ENCODE measurements at regions of chr1 and their contacts with region 1.

Region 1: GRCh38 chr1:61043010-61043820 is 39.1 kb upstream of the NFIA start:
- DNase-seq: no peak
- ATAC-seq: peak; percentile 99
- H3K4me3 ChIP-seq: peak overlapping the region; percentile 16 to 44
- H3K27ac ChIP-seq: no peak overlapping the region
- H3K4me1 ChIP-seq: no peaks in the 10 kb centered on the region
- H3K27me3 ChIP-seq: peaks cover 4% of the 10 kb centered on the region; the same call in 1 of the 2 replicates
- CTCF ChIP-seq: peak; percentile 93

Region 2: DNA sequence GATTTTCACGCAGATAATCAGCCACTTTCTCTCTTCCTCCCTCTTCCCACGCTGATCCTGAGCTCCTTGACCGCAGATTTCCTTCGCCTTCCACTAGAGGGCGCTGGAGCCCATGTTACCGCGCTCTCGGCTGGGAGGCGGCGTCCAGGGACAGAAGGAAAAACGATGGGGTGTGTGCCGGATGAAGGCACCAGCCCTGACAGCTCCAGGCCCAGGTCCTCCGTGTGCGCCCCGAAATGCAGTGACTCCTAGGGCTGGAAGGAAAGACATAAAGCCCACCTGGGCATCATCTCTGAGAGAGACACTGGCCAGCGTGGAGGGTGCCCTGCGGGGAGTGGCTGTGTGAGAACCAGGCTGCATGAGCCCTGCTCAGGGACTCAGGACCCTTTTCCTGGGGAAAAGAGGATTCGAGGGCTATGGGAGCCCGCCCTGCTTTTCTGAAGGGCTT is 1071.7 kb before region 1 on chr1:
- CTCF ChIA-PET with region 1: interaction called, 4 read pairs
- POLR2A ChIA-PET with region 1: no interaction called
- in situ Hi-C with region 1: no loop called
- intact Hi-C with region 1: loop called (anchors 5 kb)
- DNase-seq: no peak
- ATAC-seq: peak; percentile 96
- H3K4me3 ChIP-seq: peak overlapping the region in 1 of 2 experiments; percentile 25; a peak in 2 of 4 replicates
- H3K27ac ChIP-seq: no peak overlapping the region
- H3K4me1 ChIP-seq: peaks cover 3% of the 10 kb centered on the region
- H3K27me3 ChIP-seq: peaks cover 9% of the 10 kb centered on the region
- CTCF ChIP-seq: peak; percentile 94

Region 3: DNA sequence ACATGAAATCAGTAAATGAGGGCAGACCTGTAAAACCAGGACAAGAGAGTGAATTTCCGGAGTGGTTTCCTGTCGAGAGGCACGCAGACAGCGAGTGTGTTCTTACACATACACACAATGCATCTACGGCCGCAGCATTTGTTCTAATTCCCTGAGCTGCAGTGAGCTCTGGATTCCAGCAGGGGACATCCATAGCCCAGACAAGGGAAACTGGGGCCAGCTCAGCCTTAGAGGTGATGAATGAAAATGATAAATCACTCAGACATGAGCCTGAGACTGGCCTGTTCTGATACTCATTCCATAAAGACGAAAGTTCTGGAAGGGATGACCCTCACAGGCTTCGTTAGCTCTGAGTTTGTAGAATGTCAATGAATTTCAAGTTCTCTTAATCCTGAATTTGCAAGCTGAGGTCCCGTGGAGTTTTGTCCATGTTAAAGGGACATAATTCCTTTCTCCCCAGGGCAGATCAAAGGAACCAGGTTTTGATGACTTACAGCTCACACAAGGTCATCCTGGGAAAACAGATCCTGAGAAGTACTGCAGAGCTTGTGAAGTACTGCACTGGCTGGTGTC is 761.8 kb before region 1 on chr1:
- CTCF ChIA-PET with region 1: no interaction called
- POLR2A ChIA-PET with region 1: no interaction called
- in situ Hi-C with region 1: no loop called
- intact Hi-C with region 1: loop called (anchors 5 kb)
- DNase-seq: peak; percentile 43
- ATAC-seq: peak; percentile 98
- H3K4me3 ChIP-seq: no peak overlapping the region
- H3K27ac ChIP-seq: no peak overlapping the region
- H3K4me1 ChIP-seq: peaks cover 4% of the 10 kb centered on the region
- H3K27me3 ChIP-seq: no peaks in the 10 kb centered on the region
- CTCF ChIP-seq: peak; percentile 93

Region 4: DNA sequence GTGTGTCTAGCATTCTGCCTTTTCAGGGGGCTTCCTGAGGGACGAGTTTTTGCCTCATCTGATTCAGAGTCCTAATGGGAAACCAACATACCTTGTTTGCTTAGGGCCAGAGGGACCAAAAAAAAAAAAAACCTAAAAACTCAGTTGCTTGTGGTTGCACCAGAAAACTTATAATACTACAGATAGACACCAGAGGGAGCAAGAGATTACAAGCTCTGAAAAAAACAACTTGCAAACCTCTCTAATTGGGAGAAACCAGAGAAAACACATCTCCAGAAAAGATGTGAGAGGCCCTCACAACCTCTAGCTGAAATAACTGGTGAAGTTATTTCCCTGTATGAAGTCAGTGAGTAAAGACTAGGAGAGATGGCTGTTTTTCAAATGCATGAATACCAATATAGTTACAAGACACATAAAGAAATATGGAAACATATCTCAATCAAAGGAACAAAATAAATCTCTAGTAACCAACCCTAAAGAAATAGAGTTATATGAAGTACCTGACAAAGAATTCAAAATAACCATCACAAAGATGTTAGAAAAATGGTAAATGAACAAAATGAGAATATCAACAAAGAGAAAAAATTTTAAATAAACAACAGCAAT is 194.5 kb before region 1 on chr1:
- CTCF ChIA-PET with region 1: interaction called, 4 read pairs
- POLR2A ChIA-PET with region 1: no interaction called
- in situ Hi-C with region 1: no loop called
- intact Hi-C with region 1: loop called (anchors 2 kb)
- DNase-seq: peak; percentile 28
- ATAC-seq: no peak
- H3K4me3 ChIP-seq: no peak overlapping the region
- H3K27ac ChIP-seq: no peak overlapping the region
- H3K4me1 ChIP-seq: no peaks in the 10 kb centered on the region
- H3K27me3 ChIP-seq: no peaks in the 10 kb centered on the region
- CTCF ChIP-seq: peak; percentile 67

Region 5: DNA sequence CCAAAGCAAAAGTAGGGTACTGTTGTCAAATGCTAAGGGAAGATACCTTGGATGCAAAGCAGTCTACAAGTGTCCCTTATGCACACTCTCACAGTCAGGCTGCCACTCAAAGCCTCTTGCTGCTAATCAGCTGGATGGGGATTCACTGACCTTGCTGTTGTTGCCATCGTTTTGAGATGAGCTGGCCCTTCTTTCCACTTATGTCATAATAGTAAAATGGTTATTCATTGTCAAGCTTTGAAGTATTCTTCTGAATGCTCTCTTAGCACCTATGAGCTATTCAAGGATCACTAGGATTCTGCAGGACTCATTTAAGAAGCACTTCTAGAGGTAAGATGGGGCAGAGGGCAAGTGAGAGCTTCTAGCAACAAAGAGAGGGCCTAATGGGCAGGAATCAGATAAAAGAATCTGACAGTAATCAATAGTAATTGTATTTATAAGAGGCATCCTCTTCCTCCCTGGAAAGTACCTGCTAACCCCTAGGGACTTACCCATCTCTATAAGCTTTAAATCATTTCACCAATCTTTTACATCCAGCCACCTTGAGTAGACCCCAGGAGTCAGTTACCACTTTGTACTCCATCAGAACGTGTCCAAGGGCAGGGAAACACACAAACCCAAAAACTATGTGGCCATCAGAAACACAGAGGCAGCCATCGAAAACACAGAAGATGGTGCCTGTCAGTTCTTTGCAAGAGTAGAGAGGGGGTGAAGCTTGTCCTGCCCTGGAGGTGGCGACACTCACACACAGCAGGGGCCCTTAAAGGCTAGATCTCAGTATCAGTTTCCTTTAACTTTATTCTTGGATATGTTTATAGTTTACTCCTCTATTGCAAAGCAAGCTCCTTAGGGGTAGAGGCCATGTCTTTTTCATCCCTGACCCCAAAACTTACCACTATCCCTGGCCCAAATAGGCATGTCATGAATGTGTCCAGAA is 64.5 kb before region 1 on chr1:
- CTCF ChIA-PET with region 1: interaction called, 13 read pairs
- POLR2A ChIA-PET with region 1: no interaction called
- in situ Hi-C with region 1: no loop called
- intact Hi-C with region 1: loop called (anchors 2 kb)
- DNase-seq: peak; percentile 10
- ATAC-seq: peak; percentile 94
- H3K4me3 ChIP-seq: no peak overlapping the region
- H3K27ac ChIP-seq: no peak overlapping the region
- H3K4me1 ChIP-seq: no peaks in the 10 kb centered on the region
- H3K27me3 ChIP-seq: peaks cover 4% of the 10 kb centered on the region; the same call in 1 of the 2 replicates
- CTCF ChIP-seq: peak; percentile 86

Region 6: GRCh38 chr1:61227857-61228550 is 184.8 kb after region 1 on chr1:
- CTCF ChIA-PET with region 1: no interaction called
- POLR2A ChIA-PET with region 1: no interaction called
- in situ Hi-C with region 1: no loop called
- intact Hi-C with region 1: no loop called
- DNase-seq: no peak
- ATAC-seq: no peak
- H3K4me3 ChIP-seq: no peak overlapping the region
- H3K27ac ChIP-seq: no peak overlapping the region
- H3K4me1 ChIP-seq: no peaks in the 10 kb centered on the region
- H3K27me3 ChIP-seq: no peaks in the 10 kb centered on the region
- CTCF ChIP-seq: no peak

Measured in Panc1 (cell line).